Panc1 (cell line): ENCODE measurements at regions of chr10 and their contacts with region 1.

Region 1: DNA sequence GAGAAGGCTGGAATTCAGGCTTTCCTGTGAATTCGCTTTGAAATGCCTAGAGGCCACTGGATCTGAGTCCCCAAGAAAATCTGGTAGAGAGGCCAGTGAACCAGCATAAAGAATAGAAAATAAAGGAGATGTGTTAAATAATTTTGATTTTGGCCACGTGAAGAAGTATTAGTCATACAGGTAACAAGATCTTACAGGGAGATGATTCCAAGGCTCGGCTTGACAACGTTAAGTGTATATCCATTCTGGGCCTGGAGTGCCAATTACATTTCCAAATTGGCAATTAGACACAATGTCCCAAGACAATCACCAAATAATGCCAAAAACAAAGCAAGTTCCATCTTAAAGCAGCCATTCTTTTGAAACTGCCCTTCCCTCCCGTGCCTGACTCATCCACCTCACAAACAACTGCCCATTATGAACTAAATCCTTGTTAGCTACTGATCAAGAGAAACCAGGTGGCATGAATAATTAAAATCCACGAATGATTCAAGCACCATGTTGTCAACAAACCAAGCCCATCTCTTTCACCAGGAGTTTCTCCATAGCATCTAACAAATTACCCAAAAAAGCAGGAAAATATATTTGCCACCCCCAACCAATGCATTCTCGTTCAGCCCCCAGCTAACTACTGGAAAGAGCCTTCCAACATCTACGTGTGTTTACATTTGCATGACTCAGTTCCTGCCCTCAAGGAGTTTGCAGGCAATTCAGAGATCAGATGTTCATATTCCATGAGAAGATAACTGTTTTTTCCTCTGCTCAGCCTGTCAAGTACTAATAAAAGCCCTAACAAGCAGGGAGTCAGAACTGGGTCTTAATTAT is 8.5 kb downstream of the KCNMA1 start:
- DNase-seq: peak; percentile 87
- ATAC-seq: peak; percentile 79
- H3K4me3 ChIP-seq: peak overlapping the region; percentile 20 to 44
- H3K27ac ChIP-seq: peak overlapping the region; percentile 87
- H3K4me1 ChIP-seq: peaks cover 98% of the 10 kb centered on the region
- H3K27me3 ChIP-seq: no peaks in the 10 kb centered on the region
- CTCF ChIP-seq: no peak

Region 2: GRCh38 chr10:77501152-77501845 is 127.8 kb before region 1 on chr10:
- CTCF ChIA-PET with region 1: no interaction called
- POLR2A ChIA-PET with region 1: no interaction called
- in situ Hi-C with region 1: no loop called
- intact Hi-C with region 1: loop called (anchors 5 kb)
- DNase-seq: peak; percentile 86
- ATAC-seq: peak; percentile 77
- H3K4me3 ChIP-seq: no peak overlapping the region
- H3K27ac ChIP-seq: peak overlapping the region; percentile 88
- H3K4me1 ChIP-seq: peaks cover 77% of the 10 kb centered on the region
- H3K27me3 ChIP-seq: no peaks in the 10 kb centered on the region
- CTCF ChIP-seq: no peak

Region 3: DNA sequence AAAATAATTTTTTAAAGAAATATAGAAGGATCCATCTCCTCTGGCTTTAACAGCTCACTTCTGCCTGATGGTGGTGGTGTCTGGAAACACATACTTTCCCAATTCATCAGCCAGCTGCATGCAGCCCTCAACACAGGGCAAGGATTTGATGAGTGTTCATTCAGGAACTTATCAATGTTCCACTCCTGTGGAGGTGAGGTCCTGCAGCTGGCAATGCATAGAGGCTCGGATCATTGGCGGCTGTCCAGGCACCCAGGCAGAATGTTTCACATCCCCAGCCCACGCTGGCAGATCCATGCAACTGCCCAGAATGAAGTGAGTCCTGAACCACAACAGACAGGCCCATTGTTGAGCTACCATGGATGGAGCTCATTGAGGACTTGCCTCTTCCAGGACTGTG is 63.7 kb after region 1 on chr10:
- CTCF ChIA-PET with region 1: no interaction called
- POLR2A ChIA-PET with region 1: no interaction called
- in situ Hi-C with region 1: no loop called
- intact Hi-C with region 1: no loop called
- DNase-seq: no peak
- ATAC-seq: no peak
- H3K4me3 ChIP-seq: no peak overlapping the region
- H3K27ac ChIP-seq: no peak overlapping the region
- H3K4me1 ChIP-seq: no peaks in the 10 kb centered on the region
- H3K27me3 ChIP-seq: peaks cover 16% of the 10 kb centered on the region
- CTCF ChIP-seq: no peak